PC-9 (cell line): ENCODE measurements at regions of chr2 and their contacts with region 1.

Region 1: DNA sequence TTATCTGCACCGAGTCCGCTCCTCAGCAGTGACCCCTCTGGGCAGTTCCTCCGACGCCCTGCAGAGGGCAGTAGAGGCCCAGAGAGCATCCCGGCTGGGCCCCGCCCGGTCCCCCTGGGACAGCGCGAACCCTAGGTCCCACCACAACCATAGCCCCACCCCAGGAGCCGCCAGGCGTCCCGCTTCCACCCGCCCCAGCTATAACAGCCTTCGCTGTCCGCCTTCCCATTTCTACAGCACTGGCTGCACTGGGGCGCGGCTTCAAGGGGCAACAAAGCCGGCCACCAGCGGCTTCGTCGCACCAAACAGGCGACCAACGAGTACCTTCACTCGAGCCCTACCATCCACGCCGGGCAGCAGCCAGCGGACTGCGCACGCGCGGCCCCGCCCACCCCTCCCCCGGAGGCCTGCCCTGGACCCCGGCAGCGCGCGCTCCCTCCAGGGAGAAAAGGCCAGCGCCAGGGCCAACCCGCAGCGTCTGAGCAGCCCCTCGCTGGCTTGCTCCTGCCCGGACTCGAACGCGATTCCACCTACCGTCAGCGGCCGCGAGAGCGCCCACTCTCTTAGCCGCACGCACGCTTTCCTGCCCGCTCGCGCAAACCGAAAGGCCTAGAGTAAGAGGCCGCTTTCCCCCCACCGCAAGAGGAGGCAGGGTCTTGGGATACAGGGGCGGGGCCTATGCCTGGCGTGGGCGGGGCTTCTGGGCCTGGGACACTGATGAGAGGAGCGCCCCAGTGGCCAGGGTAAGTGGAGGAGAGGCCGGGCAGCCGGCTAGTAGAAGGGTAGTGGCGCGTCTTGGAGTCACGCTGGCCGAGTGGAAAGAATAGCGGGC is at the start of gene NHEJ1:
- DNase-seq: peak; percentile 79 to 95
- H3K4me3 ChIP-seq: peak within 1 kb of the TSS; percentile 72
- H3K27ac ChIP-seq: peak within 1 kb of the TSS; percentile 57
- H3K4me1 ChIP-seq: 0 out of 2 replicates have a peak, but pooled peaks cover 8% of the 10 kb centered on the region
- H3K27me3 ChIP-seq: no peaks in the 10 kb centered on the region
- CTCF ChIP-seq: peak; percentile 96
- total RNA-seq, gene NHEJ1: 9.8 and 11.2 TPM in 2 replicates

Region 2: DNA sequence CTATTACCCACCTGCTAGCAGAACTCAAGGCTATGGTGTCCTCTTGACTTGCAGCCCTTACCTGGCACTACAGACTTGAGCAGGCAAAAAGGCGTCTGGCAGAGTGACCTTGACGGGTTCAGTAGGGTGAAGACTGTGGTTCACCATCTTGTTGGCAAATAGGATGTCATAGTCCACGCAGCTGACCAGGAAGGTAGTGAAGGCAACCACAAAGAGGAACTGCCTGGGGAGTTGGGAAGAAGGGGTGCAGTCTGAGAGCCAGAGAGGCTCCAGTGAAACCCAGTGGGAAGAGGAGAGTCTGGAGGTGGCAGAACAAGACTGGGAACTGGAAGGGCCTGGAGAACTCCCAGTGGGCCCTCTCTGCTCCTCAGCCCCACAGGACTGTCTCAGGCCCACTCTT is 64.9 kb after region 1 on chr2:
- CTCF ChIA-PET with region 1: no interaction called
- POLR2A ChIA-PET with region 1: no interaction called
- intact Hi-C with region 1: no loop called
- DNase-seq: no peak
- H3K4me3 ChIP-seq: no peak overlapping the region
- H3K27ac ChIP-seq: no peak overlapping the region
- H3K4me1 ChIP-seq: peaks cover 8% of the 10 kb centered on the region; the same call in 1 of the 2 replicates
- H3K27me3 ChIP-seq: no peaks in the 10 kb centered on the region
- CTCF ChIP-seq: no peak

Region 3: GRCh38 chr2:219352448-219353023 is 192.1 kb after region 1 on chr2:
- CTCF ChIA-PET with region 1: no interaction called
- POLR2A ChIA-PET with region 1: interaction called, 5 read pairs
- intact Hi-C with region 1: loop called (anchors 2 kb)
- DNase-seq: peak; percentile 40 to 68
- H3K4me3 ChIP-seq: no peak overlapping the region
- H3K27ac ChIP-seq: no peak overlapping the region
- H3K4me1 ChIP-seq: no peaks in the 10 kb centered on the region
- H3K27me3 ChIP-seq: peaks cover 55% of the 10 kb centered on the region
- CTCF ChIP-seq: peak; percentile 85

Region 4: GRCh38 chr2:219388127-219388844 is 227.9 kb after region 1 on chr2:
- CTCF ChIA-PET with region 1: no interaction called
- POLR2A ChIA-PET with region 1: no interaction called
- intact Hi-C with region 1: loop called (anchors 1 kb)
- DNase-seq: peak; percentile 71 to 98
- H3K4me3 ChIP-seq: peak overlapping the region; percentile 53
- H3K27ac ChIP-seq: peak overlapping the region; percentile 30
- H3K4me1 ChIP-seq: peaks cover 6% of the 10 kb centered on the region; the same call in 1 of the 2 replicates
- H3K27me3 ChIP-seq: no peaks in the 10 kb centered on the region
- CTCF ChIP-seq: peak; percentile 60